WTC11 (cell line): ENCODE measurements at regions of chr2 and their contacts with region 1.

Region 1: GRCh38 chr2:237572021-237572741 is 5.8 kb downstream of the PRLH start:
- DNase-seq: peak; percentile 97
- ATAC-seq: peak; percentile 91
- H3K4me3 Mint-ChIP-seq: no peak overlapping the region
- H3K27ac Mint-ChIP-seq: peak overlapping the region; percentile 24; the same call in 1 of the 2 replicates
- H3K4me1 Mint-ChIP-seq: peaks cover 41% of the 10 kb centered on the region
- H3K27me3 Mint-ChIP-seq: no peaks in the 10 kb centered on the region
- CTCF ChIP-seq: peak; percentile 96

Region 2: GRCh38 chr2:236843161-236843968 is 728.8 kb before region 1 on chr2:
- CTCF ChIA-PET with region 1: no interaction called
- POLR2A ChIA-PET with region 1: no interaction called
- DNase-seq: no peak
- ATAC-seq: no peak
- H3K4me3 Mint-ChIP-seq: no peak overlapping the region
- H3K27ac Mint-ChIP-seq: no peak overlapping the region
- H3K4me1 Mint-ChIP-seq: peaks cover 28% of the 10 kb centered on the region
- H3K27me3 Mint-ChIP-seq: peaks cover 23% of the 10 kb centered on the region
- CTCF ChIP-seq: no peak

Region 3: GRCh38 chr2:237154082-237154638 is 418.0 kb before region 1 on chr2:
- CTCF ChIA-PET with region 1: interaction called, 13 read pairs
- POLR2A ChIA-PET with region 1: no interaction called
- DNase-seq: peak; percentile 64
- ATAC-seq: peak; percentile 38; the same call in 1 of the 2 replicates
- H3K4me3 Mint-ChIP-seq: no peak overlapping the region
- H3K27ac Mint-ChIP-seq: no peak overlapping the region
- H3K4me1 Mint-ChIP-seq: peaks cover 18% of the 10 kb centered on the region
- H3K27me3 Mint-ChIP-seq: no peaks in the 10 kb centered on the region; the same call in 1 of the 2 replicates
- CTCF ChIP-seq: peak; percentile 52

Region 4: DNA sequence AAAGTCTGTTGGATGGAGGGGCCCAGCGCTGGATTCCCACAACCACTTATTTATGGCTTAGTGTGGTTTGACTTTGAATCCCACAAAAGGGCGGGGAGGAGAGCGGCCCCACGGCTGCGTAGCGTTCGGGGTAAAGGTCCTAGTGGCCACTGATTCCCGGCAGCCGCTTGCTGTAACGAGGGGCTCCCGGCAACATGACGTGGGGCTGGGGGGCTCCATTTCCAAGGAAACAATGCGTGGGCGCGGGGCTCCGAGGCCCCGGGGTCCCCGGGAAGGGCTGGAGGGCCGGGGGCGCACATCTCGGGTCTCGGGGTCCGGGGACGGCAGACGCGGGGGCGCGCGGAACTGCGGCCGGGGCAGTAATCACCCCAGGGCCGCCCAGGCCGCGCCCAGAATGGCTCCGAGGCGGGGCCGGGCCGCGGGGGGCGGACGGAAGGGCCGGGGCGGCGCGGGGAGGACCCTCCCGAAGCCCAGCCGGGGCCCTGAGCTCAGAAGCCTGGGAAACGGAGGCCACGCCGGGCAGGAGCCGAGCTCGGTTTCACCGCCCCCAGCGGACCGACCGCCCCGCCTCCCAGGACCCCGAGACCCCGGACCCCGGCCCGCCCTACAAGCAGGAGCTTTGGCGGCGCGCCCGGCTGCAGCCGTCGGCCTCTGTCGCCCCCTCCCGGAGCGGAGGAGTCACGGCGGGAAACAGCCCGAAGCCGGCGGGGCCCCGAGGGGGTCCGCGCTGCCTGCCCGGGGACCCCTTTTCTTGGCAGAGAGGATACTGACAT is 97.1 kb before region 1 on chr2:
- CTCF ChIA-PET with region 1: interaction called, 69 read pairs
- POLR2A ChIA-PET with region 1: no interaction called
- DNase-seq: peak; percentile 88
- ATAC-seq: peak; percentile 81
- H3K4me3 Mint-ChIP-seq: peak overlapping the region; percentile 84
- H3K27ac Mint-ChIP-seq: peak overlapping the region; percentile 53; the same call in 1 of the 2 replicates
- H3K4me1 Mint-ChIP-seq: peaks cover 18% of the 10 kb centered on the region
- H3K27me3 Mint-ChIP-seq: peaks cover 47% of the 10 kb centered on the region
- CTCF ChIP-seq: peak; percentile 70

Region 5: GRCh38 chr2:237524631-237525030 is 47.5 kb before region 1 on chr2:
- CTCF ChIA-PET with region 1: interaction called, 10 read pairs
- POLR2A ChIA-PET with region 1: no interaction called
- DNase-seq: no peak
- ATAC-seq: no peak
- H3K4me3 Mint-ChIP-seq: no peak overlapping the region
- H3K27ac Mint-ChIP-seq: no peak overlapping the region
- H3K4me1 Mint-ChIP-seq: no peaks in the 10 kb centered on the region
- H3K27me3 Mint-ChIP-seq: no peaks in the 10 kb centered on the region
- CTCF ChIP-seq: no peak

Region 6: GRCh38 chr2:237558906-237559641 is 13.1 kb before region 1 on chr2:
- CTCF ChIA-PET with region 1: interaction called, 16 read pairs
- POLR2A ChIA-PET with region 1: no interaction called
- DNase-seq: no peak
- ATAC-seq: no peak
- H3K4me3 Mint-ChIP-seq: no peak overlapping the region
- H3K27ac Mint-ChIP-seq: no peak overlapping the region
- H3K4me1 Mint-ChIP-seq: no peaks in the 10 kb centered on the region
- H3K27me3 Mint-ChIP-seq: peaks cover 3% of the 10 kb centered on the region
- CTCF ChIP-seq: no peak

Region 7: GRCh38 chr2:237614151-237614720 is 42.1 kb after region 1 on chr2:
- CTCF ChIA-PET with region 1: interaction called, 24 read pairs
- POLR2A ChIA-PET with region 1: no interaction called
- DNase-seq: peak; percentile 82
- ATAC-seq: peak; percentile 89
- H3K4me3 Mint-ChIP-seq: 0 out of 2 replicates have a peak overlapping the region, but pooled peaks have one; percentile 2
- H3K27ac Mint-ChIP-seq: peak overlapping the region; percentile 93
- H3K4me1 Mint-ChIP-seq: peaks cover 62% of the 10 kb centered on the region
- H3K27me3 Mint-ChIP-seq: peaks cover 1% of the 10 kb centered on the region; the same call in 1 of the 2 replicates
- CTCF ChIP-seq: peak; percentile 36; the same call in 1 of the 2 replicates

Region 8: GRCh38 chr2:237647176-237648007 is 75.2 kb after region 1 on chr2:
- CTCF ChIA-PET with region 1: no interaction called
- POLR2A ChIA-PET with region 1: no interaction called
- DNase-seq: no peak
- ATAC-seq: no peak
- H3K4me3 Mint-ChIP-seq: no peak overlapping the region
- H3K27ac Mint-ChIP-seq: peak overlapping the region; percentile 34; the same call in 1 of the 2 replicates
- H3K4me1 Mint-ChIP-seq: peaks cover 4% of the 10 kb centered on the region; the same call in 1 of the 2 replicates
- H3K27me3 Mint-ChIP-seq: no peaks in the 10 kb centered on the region; the same call in 1 of the 2 replicates
- CTCF ChIP-seq: no peak

Region 9: DNA sequence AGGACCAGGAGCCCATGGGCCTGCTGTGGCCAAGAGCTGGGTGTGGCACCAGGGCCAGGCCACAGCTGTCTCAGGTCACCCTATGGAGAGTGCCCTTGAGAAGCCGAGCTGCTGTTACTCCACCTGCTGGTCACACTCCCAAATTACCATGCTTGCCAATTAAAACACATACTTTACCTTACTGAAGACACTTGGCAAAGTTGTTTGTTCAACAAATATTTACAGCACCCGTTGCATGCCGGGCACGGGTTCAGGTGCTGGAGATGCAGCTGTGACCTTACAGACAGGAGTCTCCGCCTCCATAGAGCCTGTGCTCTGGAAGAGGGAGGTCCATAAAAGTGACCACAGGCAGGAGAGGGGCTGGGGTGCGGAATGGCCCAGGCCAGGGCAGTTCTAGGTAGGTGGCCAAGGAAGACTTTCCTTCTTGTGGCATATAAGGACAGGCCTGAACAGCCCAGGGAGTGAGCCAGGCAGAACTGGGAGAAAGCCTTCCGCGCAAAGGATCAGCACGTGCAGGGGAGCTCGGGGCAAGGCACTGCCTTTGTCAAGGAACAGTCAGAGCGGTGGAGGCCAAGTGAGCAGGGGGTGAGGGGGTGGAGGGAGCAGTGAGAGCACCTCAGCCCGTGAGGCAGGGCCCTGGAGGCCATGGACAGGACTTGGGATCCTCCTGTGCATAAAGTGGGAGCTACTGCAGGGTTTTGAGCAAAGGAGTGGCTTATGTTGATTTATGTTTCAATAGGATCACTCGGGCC is 202.8 kb after region 1 on chr2:
- CTCF ChIA-PET with region 1: interaction called, 17 read pairs
- POLR2A ChIA-PET with region 1: no interaction called
- DNase-seq: peak; percentile 71
- ATAC-seq: peak; percentile 96
- H3K4me3 Mint-ChIP-seq: no peak overlapping the region
- H3K27ac Mint-ChIP-seq: peak overlapping the region; percentile 83
- H3K4me1 Mint-ChIP-seq: peaks cover 6% of the 10 kb centered on the region; the same call in 1 of the 2 replicates
- H3K27me3 Mint-ChIP-seq: no peaks in the 10 kb centered on the region
- CTCF ChIP-seq: peak; percentile 72